Prostate gland (tissue), 2 donors: ENCODE measurements at regions of chr11 and their contacts with region 1.

Region 1: GRCh38 chr11:62560566-62561103 is 13.1 kb downstream of the EEF1G start:
- DNase-seq: peak; percentile 95
- H3K4me3 ChIP-seq: no peak overlapping the region
- H3K27ac ChIP-seq: peak overlapping the region; percentile 71 to 79
- H3K4me1 ChIP-seq: peaks cover 16% of the 10 kb centered on the region
- H3K27me3 ChIP-seq: no peaks in the 10 kb centered on the region
- CTCF ChIP-seq: peak; percentile 73 to 95 (median 91)
- POLR2A ChIP-seq: no peak

Region 2: DNA sequence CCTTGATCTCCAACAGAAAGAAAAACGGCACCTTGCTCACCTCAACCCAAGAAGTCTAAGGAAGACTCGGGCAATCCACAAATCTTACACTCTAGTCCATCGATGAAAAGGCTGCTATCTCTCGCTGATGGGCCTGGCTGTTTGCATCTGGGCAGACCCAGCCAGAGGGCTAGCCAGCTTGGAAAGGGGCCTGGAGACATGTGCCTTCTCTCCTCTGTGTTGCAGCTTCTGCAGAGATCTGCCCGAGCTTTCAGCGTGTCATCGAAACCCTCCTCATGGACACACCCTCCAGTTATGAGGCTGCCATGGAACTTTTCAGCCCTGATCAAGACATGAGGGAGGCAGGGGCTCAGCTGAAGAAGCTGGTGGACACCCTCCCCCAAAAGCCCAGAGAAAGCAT is 138.6 kb before region 1 on chr11:
- intact Hi-C with region 1: loop called (anchors 5 kb)
- DNase-seq: no peak
- H3K4me3 ChIP-seq: no peak overlapping the region
- H3K27ac ChIP-seq: no peak overlapping the region
- H3K4me1 ChIP-seq: no peaks in the 10 kb centered on the region
- H3K27me3 ChIP-seq: no peaks in the 10 kb centered on the region
- CTCF ChIP-seq: no peak
- POLR2A ChIP-seq: no peak